A673 (cell line): ENCODE measurements at regions of chr11 and their contacts with region 1.

Region 1: GRCh38 chr11:58513747-58514367 is 6.0 kb upstream of the OR5B21 start:
- DNase-seq: peak; percentile 78
- H3K4me3 ChIP-seq: no peak overlapping the region
- H3K27ac ChIP-seq: no peak overlapping the region
- H3K4me1 ChIP-seq: no peaks in the 10 kb centered on the region
- H3K27me3 ChIP-seq: peaks cover 6% of the 10 kb centered on the region
- CTCF ChIP-seq: peak; percentile 80

Region 2: GRCh38 chr11:57567515-57568329 is 946.1 kb before region 1 on chr11 and contains the start of gene UBE2L6:
- CTCF ChIA-PET with region 1: no interaction called
- POLR2A ChIA-PET with region 1: no interaction called
- intact Hi-C with region 1: loop called (anchors 10 kb)
- DNase-seq: peak; percentile 68
- H3K4me3 ChIP-seq: peak within 1 kb of the TSS; percentile 68
- H3K27ac ChIP-seq: peak within 1 kb of the TSS; percentile 68
- H3K4me1 ChIP-seq: no peaks in the 10 kb centered on the region
- H3K27me3 ChIP-seq: no peaks in the 10 kb centered on the region
- CTCF ChIP-seq: peak; percentile 98
- total RNA-seq, gene UBE2L6: 30.4 and 38.8 TPM in 2 replicates

Region 3: DNA sequence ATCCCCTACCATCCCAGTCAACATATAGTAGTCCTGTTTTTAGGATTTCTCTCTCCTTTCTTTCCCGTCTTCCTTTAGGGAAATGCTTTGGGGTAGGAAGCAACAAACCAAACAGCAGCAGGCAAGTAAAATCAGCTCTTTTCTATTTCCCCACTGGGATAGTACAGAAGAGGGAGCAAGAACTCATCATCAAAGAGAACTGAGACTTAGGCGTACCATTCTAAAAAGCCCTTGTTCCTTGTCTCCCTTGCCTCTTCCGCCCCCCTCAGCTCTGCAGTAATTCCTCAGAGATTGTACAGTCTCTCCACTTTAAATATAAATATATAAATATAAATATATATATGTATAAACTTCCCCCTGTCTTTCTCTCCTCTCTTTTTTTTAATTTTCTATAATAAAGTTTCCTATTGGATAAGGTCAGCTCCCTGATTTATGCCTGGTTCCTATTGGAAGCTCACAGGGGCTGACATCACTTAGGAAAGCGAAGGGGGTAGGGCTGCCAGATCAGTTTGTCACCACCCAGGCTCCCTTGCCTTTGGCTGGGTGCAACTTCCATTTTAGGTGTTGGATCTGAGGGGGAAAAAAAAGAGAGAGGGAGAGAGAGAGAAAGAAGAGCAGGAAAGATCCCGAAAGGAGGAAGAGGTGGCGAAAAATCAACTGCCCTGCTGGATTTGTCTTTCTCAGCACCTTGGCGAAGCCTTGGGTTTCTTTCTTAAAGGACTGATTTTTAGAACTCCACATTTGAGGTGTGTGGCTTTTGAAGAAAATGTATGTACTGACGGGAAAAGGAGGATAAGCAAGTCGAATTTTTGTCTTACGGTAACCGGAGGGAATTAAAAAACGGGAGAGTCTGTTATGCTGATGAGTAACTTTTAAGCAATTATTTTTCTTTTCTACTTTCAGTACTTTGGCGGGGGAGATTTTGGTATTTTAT is 752.3 kb before region 1 on chr11 and contains the start of gene CTNND1:
- CTCF ChIA-PET with region 1: no interaction called
- POLR2A ChIA-PET with region 1: no interaction called
- intact Hi-C with region 1: loop called (anchors 5 kb)
- DNase-seq: peak; percentile 99
- H3K4me3 ChIP-seq: peak within 1 kb of the TSS; percentile 84
- H3K27ac ChIP-seq: peak within 1 kb of the TSS; percentile 98
- H3K4me1 ChIP-seq: peaks cover 20% of the 10 kb centered on the region
- H3K27me3 ChIP-seq: no peaks in the 10 kb centered on the region
- CTCF ChIP-seq: no peak
- total RNA-seq, gene CTNND1: 133 and 174 TPM in 2 replicates

Region 4: DNA sequence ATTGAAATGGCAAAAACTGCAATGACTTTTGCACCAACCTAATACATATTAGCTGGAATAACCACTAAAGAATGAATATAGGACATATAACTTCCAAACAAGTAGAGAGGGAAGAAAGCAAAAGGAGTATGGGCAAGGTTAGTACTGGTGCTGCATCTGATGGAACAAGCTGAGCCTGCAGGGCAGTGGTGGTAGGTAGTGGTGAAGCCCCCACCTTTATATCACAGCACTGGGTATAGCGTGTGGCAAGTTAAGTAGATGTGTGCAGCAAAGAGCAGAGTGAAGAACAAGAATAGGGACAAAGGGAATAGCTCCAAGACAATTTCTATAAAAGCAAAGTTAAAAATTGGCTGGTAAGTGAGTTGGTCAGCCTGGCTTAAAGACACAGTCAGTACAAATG is 690.0 kb before region 1 on chr11:
- CTCF ChIA-PET with region 1: no interaction called
- POLR2A ChIA-PET with region 1: no interaction called
- intact Hi-C with region 1: loop called (anchors 10 kb)
- DNase-seq: no peak
- H3K4me3 ChIP-seq: no peak overlapping the region
- H3K27ac ChIP-seq: no peak overlapping the region
- H3K4me1 ChIP-seq: no peaks in the 10 kb centered on the region
- H3K27me3 ChIP-seq: no peaks in the 10 kb centered on the region
- CTCF ChIP-seq: no peak

Region 5: GRCh38 chr11:58061813-58062212 is 452.0 kb before region 1 on chr11:
- CTCF ChIA-PET with region 1: no interaction called
- POLR2A ChIA-PET with region 1: no interaction called
- intact Hi-C with region 1: no loop called
- DNase-seq: no peak
- H3K4me3 ChIP-seq: no peak overlapping the region
- H3K27ac ChIP-seq: no peak overlapping the region
- H3K4me1 ChIP-seq: no peaks in the 10 kb centered on the region
- H3K27me3 ChIP-seq: peaks cover 3% of the 10 kb centered on the region
- CTCF ChIP-seq: no peak

Region 6: GRCh38 chr11:58493676-58494075 is 20.2 kb before region 1 on chr11:
- CTCF ChIA-PET with region 1: no interaction called
- POLR2A ChIA-PET with region 1: no interaction called
- intact Hi-C with region 1: no loop called
- DNase-seq: no peak
- H3K4me3 ChIP-seq: no peak overlapping the region
- H3K27ac ChIP-seq: no peak overlapping the region
- H3K4me1 ChIP-seq: no peaks in the 10 kb centered on the region
- H3K27me3 ChIP-seq: peaks cover 6% of the 10 kb centered on the region
- CTCF ChIP-seq: no peak